Aorta (tissue), 5 donors: ENCODE measurements at regions of chr3 and their contacts with region 1.

Region 1: GRCh38 chr3:196684548-196685407 is 27.3 kb downstream of the CEP19 start:
- DNase-seq: peak in 1 of 2 donors; percentile 70
- ATAC-seq: peak; percentile 84
- H3K4me3 ChIP-seq: no peak overlapping the region
- H3K27ac ChIP-seq: no peak overlapping the region
- H3K4me1 ChIP-seq: no peaks in the 10 kb centered on the region
- H3K27me3 ChIP-seq: no peaks in the 10 kb centered on the region

Region 2: DNA sequence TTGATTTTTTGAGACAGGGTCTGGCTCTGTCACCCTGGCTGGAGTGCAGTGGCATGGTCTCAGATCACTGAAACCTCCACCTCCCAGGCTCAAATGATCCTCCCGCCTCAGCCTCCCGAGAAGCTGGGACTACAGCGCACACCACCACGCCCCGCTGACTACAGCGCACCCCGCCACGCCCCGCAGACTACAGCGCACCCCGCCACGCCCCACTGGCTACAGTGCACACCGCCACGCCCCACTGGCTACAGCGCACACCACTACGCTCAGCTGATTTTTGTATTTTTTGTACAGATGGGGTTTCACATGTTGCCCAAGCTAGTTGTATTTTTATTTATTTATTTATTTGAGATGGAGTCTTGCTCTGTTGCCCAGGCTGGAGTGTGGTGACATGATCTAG is 432.9 kb before region 1 on chr3:
- intact Hi-C with region 1: loop called in 1 of 2 experiments (anchors 10 kb)
- DNase-seq: no peak
- ATAC-seq: no peak
- H3K4me3 ChIP-seq: no peak overlapping the region
- H3K27ac ChIP-seq: no peak overlapping the region
- H3K4me1 ChIP-seq: no peaks in the 10 kb centered on the region
- H3K27me3 ChIP-seq: no peaks in the 10 kb centered on the region

Region 3: DNA sequence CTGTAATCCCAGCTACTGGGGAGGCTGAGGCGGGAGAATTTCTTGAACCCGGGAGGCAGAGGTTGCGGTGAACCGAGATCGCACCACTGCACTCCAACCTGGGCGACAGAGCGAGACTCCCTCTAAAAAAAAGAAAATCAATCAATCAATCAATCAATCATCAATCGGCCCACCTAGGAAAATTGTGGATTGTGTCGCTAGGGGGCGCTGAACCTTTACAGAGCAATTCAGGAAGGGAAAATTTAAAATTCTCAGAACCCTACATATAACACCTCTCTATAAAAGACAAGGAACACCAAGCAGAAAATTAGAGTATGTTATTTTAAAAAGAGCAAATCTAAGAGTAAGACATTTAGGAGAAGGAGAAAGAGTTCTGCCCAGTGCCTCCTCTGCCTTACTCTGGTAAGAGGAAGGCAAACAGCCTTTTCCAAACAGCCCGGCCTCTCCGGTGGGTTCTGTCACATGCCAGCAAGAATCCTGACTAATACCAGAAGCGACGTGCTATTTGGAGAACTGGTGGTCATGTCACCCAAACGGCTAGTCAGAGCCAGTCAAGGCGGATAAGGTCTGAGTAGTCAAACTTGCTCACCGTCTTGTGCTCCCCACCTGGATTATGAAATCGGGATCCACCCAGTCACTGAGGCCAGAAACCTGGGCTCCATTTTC is 147.3 kb before region 1 on chr3:
- intact Hi-C with region 1: loop called (anchors 10 kb)
- DNase-seq: no peak
- ATAC-seq: no peak
- H3K4me3 ChIP-seq: no peak overlapping the region
- H3K27ac ChIP-seq: no peak overlapping the region
- H3K4me1 ChIP-seq: no peaks in the 10 kb centered on the region
- H3K27me3 ChIP-seq: no peaks in the 10 kb centered on the region

Region 4: GRCh38 chr3:196609343-196609775 is 75.4 kb before region 1 on chr3:
- intact Hi-C with region 1: loop called (anchors 1 to 10 kb)
- DNase-seq: peak; percentile 93 to 94
- ATAC-seq: peak; percentile 94
- H3K4me3 ChIP-seq: no peak overlapping the region
- H3K27ac ChIP-seq: no peak overlapping the region
- H3K4me1 ChIP-seq: no peaks in the 10 kb centered on the region
- H3K27me3 ChIP-seq: no peaks in the 10 kb centered on the region